H1 (cell line): ENCODE measurements at regions of chr4 and their contacts with region 1.

Region 1: GRCh38 chr4:140153718-140154571 is at the start of gene MAML3:
- DNase-seq: peak; percentile 47 to 94
- H3K4me3 ChIP-seq: peak within 1 kb of the TSS; percentile 86 to 98 (median 94)
- H3K27ac ChIP-seq: no peak within 1 kb of the TSS
- H3K4me1 ChIP-seq: peaks cover 0 to 4% (median 2%) of the 10 kb centered on the region in 4 experiments; a peak in 4 of 7 replicates
- H3K27me3 ChIP-seq: peaks cover 0 to 3% (median 1%) of the 10 kb centered on the region in 4 experiments; a peak in 3 of 7 replicates
- CTCF ChIP-seq: no peak
- EP300 ChIP-seq: peak in 1 of 2 experiments; percentile 64; a peak in 1 of 3 replicates
- POLR2A ChIP-seq: no peak
- RAD21 ChIP-seq: peak in 1 of 2 experiments; percentile 37; a peak in 2 of 4 replicates
- total RNA-seq, gene MAML3: 5.6 and 5.7 TPM in 2 replicates

Region 2: DNA sequence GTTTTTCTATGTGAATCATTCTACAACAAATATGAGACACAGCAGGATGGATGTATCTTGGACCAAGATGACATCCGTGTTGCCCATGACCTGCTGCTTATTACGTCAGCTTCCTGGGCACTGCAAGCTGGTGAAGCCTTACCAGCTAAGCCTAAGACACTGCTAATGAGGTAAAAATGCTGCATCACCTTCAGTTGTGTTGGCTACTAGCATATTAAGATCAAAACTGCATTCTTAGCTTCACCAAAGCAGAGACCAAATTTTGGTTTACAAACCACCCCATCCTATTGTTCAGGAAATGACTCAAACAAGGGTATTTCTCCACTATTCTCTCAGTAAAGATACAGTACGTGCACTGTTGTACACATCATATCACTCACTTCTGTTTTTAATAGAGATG is 50.3 kb before region 1 on chr4:
- CTCF ChIA-PET with region 1: no interaction called
- POLR2A ChIA-PET with region 1: no interaction called
- DNase-seq: no peak
- H3K4me3 ChIP-seq: no peak overlapping the region
- H3K27ac ChIP-seq: no peak overlapping the region
- H3K4me1 ChIP-seq: no peaks in the 10 kb centered on the region; a peak in 1 of 7 replicates
- H3K27me3 ChIP-seq: no peaks in the 10 kb centered on the region
- CTCF ChIP-seq: no peak
- EP300 ChIP-seq: no peak
- POLR2A ChIP-seq: no peak
- RAD21 ChIP-seq: no peak

Region 3: GRCh38 chr4:140136509-140136908 is 17.4 kb before region 1 on chr4:
- CTCF ChIA-PET with region 1: no interaction called
- POLR2A ChIA-PET with region 1: interaction called, 11 read pairs
- DNase-seq: no peak
- H3K4me3 ChIP-seq: no peak overlapping the region
- H3K27ac ChIP-seq: no peak overlapping the region
- H3K4me1 ChIP-seq: peaks cover 0 to 14% (median 3%) of the 10 kb centered on the region in 4 experiments; a peak in 3 of 7 replicates
- H3K27me3 ChIP-seq: no peaks in the 10 kb centered on the region
- CTCF ChIP-seq: no peak
- EP300 ChIP-seq: no peak
- POLR2A ChIP-seq: no peak
- RAD21 ChIP-seq: no peak

Region 4: GRCh38 chr4:140237606-140237986 is 83.7 kb after region 1 on chr4:
- CTCF ChIA-PET with region 1: interaction called, 4 read pairs
- POLR2A ChIA-PET with region 1: interaction called, 25 read pairs
- DNase-seq: peak; percentile 71 to 72
- H3K4me3 ChIP-seq: peak overlapping the region in 2 of 4 experiments; percentile 27 to 45; a peak in 4 of 8 replicates
- H3K27ac ChIP-seq: peak overlapping the region; percentile 66; the same call in 1 of the 2 replicates
- H3K4me1 ChIP-seq: peaks cover 17 to 25% (median 25%) of the 10 kb centered on the region in 4 experiments
- H3K27me3 ChIP-seq: no peaks in the 10 kb centered on the region; a peak in 2 of 7 replicates
- CTCF ChIP-seq: no peak
- EP300 ChIP-seq: no peak
- POLR2A ChIP-seq: peak in 1 of 2 experiments; percentile 74; a peak in 1 of 3 replicates
- RAD21 ChIP-seq: no peak